GM10248 (cell line): ENCODE measurements at regions of chr22 and their contacts with region 1.

Region 1: DNA sequence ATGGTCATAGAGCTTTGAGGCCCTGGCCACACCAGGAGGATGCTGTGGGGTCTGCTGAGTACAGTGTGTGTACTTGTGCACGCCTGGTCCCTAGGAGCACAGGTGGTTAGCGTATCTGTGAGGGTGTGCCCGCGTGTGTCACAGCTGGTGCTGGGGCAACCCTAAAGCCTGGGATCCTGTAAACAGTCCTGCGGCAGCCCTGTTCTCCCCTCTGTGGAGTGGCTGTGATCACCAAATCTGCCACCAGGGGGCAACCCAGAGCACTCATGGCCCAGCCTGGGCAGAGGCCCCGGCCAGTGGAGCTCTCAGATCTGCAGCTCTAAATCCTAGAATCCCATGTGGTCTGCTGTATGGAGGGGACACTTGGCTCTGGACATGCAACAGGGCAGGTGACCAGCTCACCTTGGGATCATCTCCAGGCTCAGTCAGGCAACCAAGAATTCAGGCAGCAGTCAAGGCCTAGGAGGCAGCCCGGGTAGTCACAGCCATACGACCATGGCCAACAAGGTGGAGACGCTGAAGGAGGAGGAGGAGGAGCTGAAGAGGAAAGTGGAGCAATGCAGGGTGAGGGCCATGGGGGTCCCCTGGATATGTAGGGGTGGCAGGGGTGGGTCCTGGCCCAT is 3.9 kb downstream of the SH3BP1 start:
- DNase-seq: peak; percentile 86
- CTCF ChIP-seq: peak; percentile 90

Region 2: DNA sequence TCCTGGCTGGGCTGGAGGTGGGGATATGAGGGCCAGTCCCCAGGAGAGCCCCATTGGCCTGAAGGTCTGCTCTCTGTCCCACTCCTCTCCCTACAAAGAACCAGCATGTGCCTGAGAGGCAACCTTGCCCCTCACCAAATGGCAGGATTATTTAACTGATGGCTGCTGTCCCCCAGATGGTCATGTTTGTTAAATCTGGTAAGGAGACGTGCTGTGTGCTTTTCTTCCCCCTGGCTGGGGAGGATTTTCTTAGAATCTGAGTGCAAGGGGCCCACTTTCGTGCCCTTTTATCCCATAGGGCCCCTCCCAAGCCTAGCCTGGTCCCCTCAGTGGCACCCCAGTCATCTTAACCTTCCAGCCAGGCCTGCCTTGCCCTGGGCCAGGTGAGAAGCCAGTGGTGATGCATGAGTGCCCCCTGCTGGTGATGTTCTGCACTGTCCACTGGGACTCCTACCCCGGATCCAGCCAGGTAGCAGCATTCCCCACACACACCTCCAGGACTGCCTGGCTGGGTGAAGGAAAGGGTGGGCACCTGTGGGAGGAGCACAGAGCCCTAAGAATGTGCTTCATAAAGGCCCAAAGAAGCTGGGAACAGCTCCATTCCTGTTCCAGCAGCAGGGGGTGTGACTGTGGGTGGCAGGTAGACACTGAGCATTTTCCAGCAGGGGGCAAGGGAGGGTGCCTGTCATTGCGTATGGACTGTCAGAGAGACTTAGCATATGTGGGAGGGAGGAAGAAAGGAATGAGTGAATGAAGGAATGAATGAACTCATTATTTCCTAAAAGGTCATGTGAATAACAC is 186.0 kb before region 1 on chr22:
- CTCF ChIA-PET with region 1: no interaction called
- POLR2A ChIA-PET with region 1: no interaction called
- DNase-seq: peak; percentile 87
- CTCF ChIP-seq: peak; percentile 76

Region 3: DNA sequence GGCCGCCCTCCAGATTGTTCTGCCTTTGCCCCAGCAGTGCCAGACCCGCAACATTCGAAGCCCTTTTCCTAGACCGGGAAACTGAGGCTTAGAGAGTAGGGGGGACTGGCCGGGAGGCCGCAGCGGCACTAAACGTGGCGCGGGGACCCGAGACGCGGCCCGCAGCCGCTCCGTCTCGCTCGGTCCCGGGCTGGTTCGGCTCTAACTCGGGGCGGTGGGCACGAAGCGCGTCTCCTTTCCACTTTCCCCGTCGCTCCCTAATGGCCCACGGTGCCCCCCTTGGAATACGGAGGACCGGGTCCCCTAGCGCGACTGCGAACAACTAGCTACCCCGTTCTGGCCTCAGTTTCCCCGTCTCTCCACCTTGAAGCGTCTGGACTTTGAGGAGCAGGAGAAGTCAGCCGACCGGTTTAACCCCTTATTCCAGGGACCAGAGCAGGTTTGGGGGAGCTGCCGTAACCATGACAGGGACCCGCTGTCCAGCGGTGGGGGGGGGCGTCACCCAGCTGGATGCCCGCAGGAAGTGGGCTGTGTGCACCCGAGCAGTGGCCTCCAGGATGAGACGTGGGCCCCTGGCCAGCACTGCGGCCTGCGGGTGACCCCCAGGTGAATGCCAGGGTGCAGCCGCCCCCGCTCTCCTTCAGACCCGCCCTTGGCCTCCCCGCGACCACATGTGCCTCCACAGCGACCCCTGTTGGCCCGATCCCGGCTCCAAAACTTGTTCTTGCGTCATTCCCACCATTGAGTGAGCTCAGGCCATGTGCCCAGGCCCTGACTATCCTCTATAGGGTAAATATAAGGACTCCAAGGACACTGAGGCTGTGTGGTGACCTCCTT is 81.9 kb before region 1 on chr22:
- CTCF ChIA-PET with region 1: no interaction called
- POLR2A ChIA-PET with region 1: no interaction called
- DNase-seq: peak; percentile 85
- CTCF ChIP-seq: peak; percentile 64

Region 4: DNA sequence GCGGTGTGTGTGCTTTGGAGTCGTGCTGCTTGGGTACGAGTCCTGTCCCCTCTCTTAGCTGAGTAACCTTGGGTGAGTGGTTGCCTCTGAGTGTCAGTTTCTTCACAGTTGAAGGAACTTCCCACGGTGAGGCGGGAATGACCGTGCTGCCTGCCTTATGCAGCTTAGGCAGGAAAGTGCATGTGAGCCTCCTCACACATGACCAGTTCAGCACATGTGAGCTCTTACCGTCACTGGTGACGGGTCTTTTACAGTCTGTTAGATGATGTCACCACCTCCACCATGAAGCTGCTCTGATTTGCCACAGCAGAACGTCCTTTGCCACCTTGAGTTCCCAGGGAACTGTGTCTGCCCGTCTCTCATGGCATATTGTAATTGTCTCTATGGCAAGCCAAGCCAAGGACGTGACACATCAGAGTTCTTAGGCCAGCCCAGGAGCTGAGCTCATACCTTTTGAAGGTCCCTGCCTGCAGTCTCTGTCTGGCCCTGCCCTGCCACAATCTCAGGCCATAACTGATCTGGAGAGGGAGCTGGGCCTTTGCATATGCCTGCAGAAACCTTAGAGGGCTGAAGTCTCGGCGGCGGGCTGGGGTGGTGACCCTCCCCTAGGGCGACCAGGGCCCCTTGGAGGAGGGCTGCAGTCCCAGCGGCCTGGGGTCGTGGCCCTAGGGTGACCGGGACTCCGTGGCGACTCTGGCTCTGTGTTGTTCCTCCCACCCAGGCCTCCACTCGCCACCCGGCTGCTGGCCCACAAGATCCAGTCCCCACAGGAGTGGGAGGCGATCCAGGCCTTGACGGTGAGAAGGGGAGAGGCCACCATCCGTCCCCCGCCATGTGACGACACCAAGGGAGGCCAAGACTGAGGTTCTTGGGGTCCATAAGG is 26.9 kb before region 1 on chr22:
- CTCF ChIA-PET with region 1: interaction called, 190 read pairs
- POLR2A ChIA-PET with region 1: no interaction called
- DNase-seq: no peak
- CTCF ChIP-seq: no peak

Region 5: GRCh38 chr22:37658133-37659065 is 15.1 kb after region 1 on chr22 and contains the start of gene PDXP:
- CTCF ChIA-PET with region 1: interaction called, 179 read pairs
- POLR2A ChIA-PET with region 1: interaction called, 6 read pairs
- DNase-seq: peak; percentile 97
- CTCF ChIP-seq: no peak

Region 6: DNA sequence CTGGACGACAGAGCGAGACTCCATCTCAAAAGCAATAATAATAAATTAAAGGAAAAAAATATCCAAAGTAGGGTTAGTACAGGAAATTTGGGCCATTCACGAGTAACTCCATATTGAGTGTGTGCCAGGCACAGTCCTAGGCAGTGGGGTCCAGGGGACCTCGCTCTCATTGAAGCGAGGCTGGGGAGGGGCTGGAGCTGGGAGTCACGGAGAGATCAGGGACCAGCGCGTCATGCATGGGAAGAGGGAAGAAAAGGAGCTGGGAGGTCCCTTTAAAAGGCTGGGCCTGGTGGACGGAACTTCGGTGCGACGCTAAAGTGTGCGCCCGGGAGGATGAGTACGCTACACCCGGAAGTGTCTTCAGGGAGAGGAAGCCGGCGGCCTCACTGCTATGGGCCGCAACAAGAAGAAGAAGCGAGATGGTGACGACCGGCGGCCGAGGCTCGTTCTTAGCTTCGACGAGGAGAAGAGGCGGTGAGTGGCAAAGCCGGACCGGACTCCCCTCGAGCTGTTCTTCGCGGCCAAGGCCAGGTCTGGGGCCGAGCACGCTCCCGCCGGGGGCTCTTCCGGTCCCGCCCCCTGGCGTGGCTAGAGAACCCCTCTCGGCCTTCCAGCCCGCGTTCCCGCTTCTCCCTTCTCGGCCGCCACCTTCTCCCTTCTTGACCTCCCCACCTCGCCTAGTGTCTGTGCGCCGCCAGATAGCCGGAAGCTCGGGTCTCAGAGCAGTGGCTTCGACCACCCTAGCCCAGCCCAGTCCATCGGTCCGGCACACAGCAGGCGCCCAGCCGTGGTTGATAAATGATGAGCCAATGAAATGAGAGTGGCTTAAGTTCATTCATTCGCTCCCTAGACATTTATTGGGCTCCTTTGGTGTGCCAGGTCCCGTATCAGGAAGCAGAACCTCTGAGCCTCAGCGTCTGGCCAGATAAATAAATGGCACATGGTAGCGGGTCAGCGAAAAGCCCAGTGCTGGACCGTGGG is 43.0 kb after region 1 on chr22 and contains the start of gene NOL12:
- CTCF ChIA-PET with region 1: interaction called, 298 read pairs
- POLR2A ChIA-PET with region 1: interaction called, 6 read pairs
- DNase-seq: peak; percentile 89
- CTCF ChIP-seq: no peak

Region 7: DNA sequence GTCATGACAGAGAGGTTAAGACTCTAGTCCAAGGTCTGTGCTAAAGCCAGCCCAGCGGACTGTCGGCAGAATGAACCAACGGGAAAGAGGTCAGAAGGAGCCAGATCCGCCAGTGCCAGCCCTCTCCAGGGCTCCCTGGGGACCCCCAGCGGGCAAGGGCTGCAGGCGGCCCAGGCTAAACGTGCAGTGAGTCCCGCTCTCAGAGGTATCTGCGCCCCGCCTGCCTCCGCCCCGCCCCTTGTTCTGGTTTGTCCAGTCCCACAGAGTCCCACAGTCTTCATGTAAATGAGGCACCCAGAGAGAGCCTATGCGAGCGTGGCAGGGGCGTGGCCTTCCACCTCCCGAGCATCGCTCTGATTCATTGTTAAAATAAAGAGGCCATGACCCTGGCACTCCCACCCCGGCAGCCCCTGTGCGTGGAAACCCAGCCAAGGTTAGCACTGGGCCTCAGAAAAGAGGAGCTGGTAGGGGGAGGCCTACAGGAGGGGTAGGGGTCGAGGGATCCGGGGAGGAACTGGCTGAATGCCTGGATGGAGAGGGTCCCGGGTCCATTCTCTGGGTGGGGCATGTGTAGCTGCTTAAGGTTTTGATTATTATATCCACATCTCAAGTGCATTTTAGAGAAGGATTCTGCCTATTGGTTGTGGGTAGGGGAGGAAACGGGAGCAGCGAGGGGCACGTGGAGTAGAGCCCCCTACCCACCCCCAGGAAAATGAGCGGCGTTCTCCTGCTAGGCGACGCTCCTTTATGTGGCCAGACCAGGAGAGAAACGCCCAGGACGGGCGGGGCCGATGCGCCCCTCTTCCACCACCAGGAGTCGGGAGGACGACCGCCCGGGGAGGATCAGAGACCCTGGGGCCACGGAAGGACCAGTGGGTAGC is 53.6 kb after region 1 on chr22 and contains the start of gene TRIOBP:
- CTCF ChIA-PET with region 1: interaction called, 13 read pairs
- POLR2A ChIA-PET with region 1: no interaction called
- DNase-seq: peak; percentile 86
- CTCF ChIP-seq: peak; percentile 38